IMR-90 (cell line): ENCODE measurements at regions of chr18 and their contacts with region 1.

Region 1: GRCh38 chr18:54392543-54393023 is 34.9 kb downstream of the C18orf54 start:
- DNase-seq: peak; percentile 63
- ATAC-seq: peak; percentile 71
- H3K4me3 ChIP-seq: no peak overlapping the region
- H3K27ac ChIP-seq: no peak overlapping the region
- H3K4me1 ChIP-seq: no peaks in the 10 kb centered on the region
- H3K27me3 ChIP-seq: no peaks in the 10 kb centered on the region; the same call in 1 of the 2 replicates
- CTCF ChIP-seq: peak; percentile 73
- POLR2A ChIP-seq: no peak
- RAD21 ChIP-seq: peak; percentile 58

Region 2: GRCh38 chr18:54679318-54680149 is 287.0 kb after region 1 on chr18:
- CTCF ChIA-PET with region 1: no interaction called
- POLR2A ChIA-PET with region 1: no interaction called
- dilution Hi-C with region 1: no loop called
- in situ Hi-C with region 1: no loop called
- intact Hi-C with region 1: no loop called
- DNase-seq: peak; percentile 83
- ATAC-seq: peak; percentile 95
- H3K4me3 ChIP-seq: no peak overlapping the region
- H3K27ac ChIP-seq: no peak overlapping the region
- H3K4me1 ChIP-seq: no peaks in the 10 kb centered on the region
- H3K27me3 ChIP-seq: no peaks in the 10 kb centered on the region
- CTCF ChIP-seq: peak; percentile 84
- POLR2A ChIP-seq: no peak
- RAD21 ChIP-seq: peak; percentile 93

Region 3: DNA sequence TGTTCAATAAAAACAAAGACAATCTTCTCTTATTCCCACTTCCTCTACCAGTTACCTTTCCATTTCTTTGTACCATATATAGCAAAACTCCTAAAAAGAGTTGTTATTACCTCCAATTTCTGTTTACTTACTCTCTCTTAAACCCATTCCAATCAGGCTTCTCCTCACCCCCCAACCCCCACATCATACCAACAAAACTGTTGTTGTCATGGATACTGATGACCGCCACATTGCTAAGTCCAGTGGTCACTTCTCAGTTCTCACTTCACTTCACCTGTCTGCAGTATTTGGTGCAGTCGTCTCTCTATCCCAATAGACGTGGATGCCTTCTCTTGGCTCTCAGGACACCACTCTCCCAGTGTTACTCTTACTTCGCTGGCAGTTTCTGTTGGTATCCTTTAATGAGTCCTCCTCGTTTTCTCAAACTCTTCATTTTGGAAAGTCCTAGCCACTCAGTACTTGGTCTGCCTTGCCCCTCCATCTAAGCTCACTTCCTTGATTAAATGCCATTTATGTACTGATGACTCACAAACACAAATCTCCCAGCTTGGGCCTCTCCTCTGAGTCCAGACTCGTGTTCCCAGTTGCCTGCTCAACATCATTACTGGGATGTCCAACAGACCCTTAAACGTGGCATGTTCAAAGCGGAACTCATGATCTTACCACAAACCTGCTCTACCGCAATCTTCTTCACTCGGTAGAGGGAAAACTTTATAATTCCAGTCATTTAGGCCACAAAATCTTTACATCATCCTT is 580.3 kb after region 1 on chr18:
- CTCF ChIA-PET with region 1: no interaction called
- POLR2A ChIA-PET with region 1: no interaction called
- dilution Hi-C with region 1: no loop called
- in situ Hi-C with region 1: loop called (anchors 10 kb)
- intact Hi-C with region 1: no loop called
- DNase-seq: no peak
- ATAC-seq: no peak
- H3K4me3 ChIP-seq: no peak overlapping the region
- H3K27ac ChIP-seq: no peak overlapping the region
- H3K4me1 ChIP-seq: peaks cover 6% of the 10 kb centered on the region
- H3K27me3 ChIP-seq: no peaks in the 10 kb centered on the region
- CTCF ChIP-seq: no peak
- POLR2A ChIP-seq: no peak
- RAD21 ChIP-seq: no peak